ENCODE measurements at regions of chr1 and their contacts with region 1.

Region 1: DNA sequence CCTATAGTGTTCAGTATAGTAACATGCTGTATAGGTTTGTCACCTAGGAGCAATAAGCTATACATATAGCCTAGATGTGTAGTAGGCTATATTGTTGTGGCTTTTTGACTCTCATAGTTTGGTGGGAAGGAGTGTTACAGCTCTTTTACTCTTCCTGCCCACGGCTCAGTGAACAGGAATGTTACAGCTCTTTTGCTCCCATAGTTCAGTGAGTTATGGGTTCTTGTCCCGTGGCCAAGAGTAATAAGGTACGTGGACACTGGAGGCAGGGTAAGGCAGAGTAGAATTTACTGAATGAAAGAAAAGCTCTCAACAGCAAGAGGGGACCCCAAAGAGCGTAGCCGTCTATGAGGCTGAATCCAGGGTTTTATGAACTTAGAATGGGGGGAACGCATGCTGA is 734.3 kb downstream of the ADGRL2 start:
- H3K4me3 Mint-ChIP-seq: no peak overlapping the region
- H3K27ac Mint-ChIP-seq: no peak overlapping the region
- H3K4me1 Mint-ChIP-seq: no peaks in the 10 kb centered on the region
- H3K27me3 Mint-ChIP-seq: no peaks in the 10 kb centered on the region

Region 2: DNA sequence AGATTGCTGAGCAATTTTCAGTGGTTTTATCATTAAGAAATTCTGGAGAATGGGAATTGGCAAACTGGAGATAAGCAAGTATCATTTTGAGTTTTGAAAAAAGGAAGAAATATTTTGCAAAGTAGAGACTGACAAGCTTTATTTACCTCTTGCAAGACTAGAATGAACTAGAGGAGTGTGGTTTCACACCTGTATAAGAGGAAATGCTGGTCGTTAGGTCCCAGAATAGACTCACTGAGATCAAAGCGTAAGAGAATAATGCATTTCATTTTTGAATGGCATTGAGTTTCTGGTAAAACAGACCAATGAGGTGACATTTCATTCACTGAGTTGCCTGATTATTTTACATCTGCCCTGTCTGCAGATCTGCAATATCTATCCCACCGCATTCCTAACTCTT is 426.2 kb before region 1 on chr1:
- intact Hi-C with region 1: loop called (anchors 5 kb)
- H3K4me3 Mint-ChIP-seq: no peak overlapping the region
- H3K27ac Mint-ChIP-seq: no peak overlapping the region
- H3K4me1 Mint-ChIP-seq: no peaks in the 10 kb centered on the region
- H3K27me3 Mint-ChIP-seq: no peaks in the 10 kb centered on the region

Measured in dendritic cell treated with granulocyte-macrophage colony-stimulating factor and Interleukin-4, amounts not matched to agents 40 ng/mL and 50 ng/mL, for 4 days (primary cell).